ENCODE measurements at regions of chr7 and their contacts with region 1.

Region 1: GRCh38 chr7:142248166-142249160 is 9.4 kb downstream of the PRSS58 start:
- DNase-seq: peak; percentile 25
- ATAC-seq: peak; percentile 86
- H3K4me3 Mint-ChIP-seq: no peak overlapping the region
- H3K27ac Mint-ChIP-seq: no peak overlapping the region
- H3K4me1 Mint-ChIP-seq: peaks cover 16% of the 10 kb centered on the region
- H3K27me3 Mint-ChIP-seq: no peaks in the 10 kb centered on the region; the same call in 1 of the 2 replicates
- CTCF ChIP-seq: no peak

Region 2: GRCh38 chr7:142231716-142232115 is 16.7 kb before region 1 on chr7:
- CTCF ChIA-PET with region 1: interaction called, 20 read pairs
- POLR2A ChIA-PET with region 1: no interaction called
- DNase-seq: peak; percentile 77
- ATAC-seq: peak; percentile 100
- H3K4me3 Mint-ChIP-seq: no peak overlapping the region; the same call in 1 of the 2 replicates
- H3K27ac Mint-ChIP-seq: no peak overlapping the region
- H3K4me1 Mint-ChIP-seq: peaks cover 15% of the 10 kb centered on the region
- H3K27me3 Mint-ChIP-seq: peaks cover 5% of the 10 kb centered on the region
- CTCF ChIP-seq: peak; percentile 29; the same call in 1 of the 2 replicates

Measured in WTC11 (cell line).